Transverse colon (tissue), 4 donors: ENCODE measurements at regions of chr16 and their contacts with region 1.

Region 1: GRCh38 chr16:6510261-6510660 is 822.4 kb upstream of the RBFOX1 start:
- DNase-seq: no peak
- H3K4me3 ChIP-seq: no peak overlapping the region
- H3K27ac ChIP-seq: no peak overlapping the region
- H3K4me1 ChIP-seq: no peaks in the 10 kb centered on the region
- H3K27me3 ChIP-seq: no peaks in the 10 kb centered on the region
- CTCF ChIP-seq: no peak
- EP300 ChIP-seq: no peak
- POLR2A ChIP-seq: no peak

Region 2: DNA sequence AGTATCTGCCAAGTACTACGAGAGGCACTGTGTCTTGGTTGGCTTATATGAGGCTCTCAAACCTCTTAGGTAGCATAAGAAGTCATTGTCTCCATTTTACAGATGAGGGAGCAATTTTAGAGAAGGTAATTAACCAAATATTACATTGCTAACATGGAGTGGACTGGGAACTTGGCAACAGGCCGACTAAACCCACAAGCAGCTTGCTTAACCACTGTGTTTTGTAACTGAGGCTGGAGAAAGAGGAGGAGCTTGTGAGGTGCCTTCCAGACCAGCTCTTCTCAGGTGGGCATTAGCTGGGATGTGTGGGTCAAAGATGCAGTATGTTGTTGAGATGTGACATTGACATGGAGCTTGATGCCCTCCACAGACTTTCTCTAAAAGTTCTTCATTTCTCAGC is 13.3 kb before region 1 on chr16:
- in situ Hi-C with region 1: no loop called
- intact Hi-C with region 1: no loop called
- DNase-seq: no peak
- H3K4me3 ChIP-seq: no peak overlapping the region
- H3K27ac ChIP-seq: no peak overlapping the region
- H3K4me1 ChIP-seq: peaks cover 0 to 6% (median 0%) of the 10 kb centered on the region in 4 donors
- H3K27me3 ChIP-seq: no peaks in the 10 kb centered on the region
- CTCF ChIP-seq: no peak
- EP300 ChIP-seq: no peak
- POLR2A ChIP-seq: no peak

Region 3: GRCh38 chr16:6611535-6611934 is 101.3 kb after region 1 on chr16:
- in situ Hi-C with region 1: loop called in 1 of 4 experiments (anchors 25 kb)
- intact Hi-C with region 1: no loop called
- DNase-seq: no peak
- H3K4me3 ChIP-seq: no peak overlapping the region
- H3K27ac ChIP-seq: no peak overlapping the region
- H3K4me1 ChIP-seq: no peaks in the 10 kb centered on the region
- H3K27me3 ChIP-seq: no peaks in the 10 kb centered on the region
- CTCF ChIP-seq: no peak
- EP300 ChIP-seq: no peak
- POLR2A ChIP-seq: no peak